CD8-positive, alpha-beta memory T cell (primary cell): ENCODE measurements at regions of chr19 and their contacts with region 1.

Region 1: DNA sequence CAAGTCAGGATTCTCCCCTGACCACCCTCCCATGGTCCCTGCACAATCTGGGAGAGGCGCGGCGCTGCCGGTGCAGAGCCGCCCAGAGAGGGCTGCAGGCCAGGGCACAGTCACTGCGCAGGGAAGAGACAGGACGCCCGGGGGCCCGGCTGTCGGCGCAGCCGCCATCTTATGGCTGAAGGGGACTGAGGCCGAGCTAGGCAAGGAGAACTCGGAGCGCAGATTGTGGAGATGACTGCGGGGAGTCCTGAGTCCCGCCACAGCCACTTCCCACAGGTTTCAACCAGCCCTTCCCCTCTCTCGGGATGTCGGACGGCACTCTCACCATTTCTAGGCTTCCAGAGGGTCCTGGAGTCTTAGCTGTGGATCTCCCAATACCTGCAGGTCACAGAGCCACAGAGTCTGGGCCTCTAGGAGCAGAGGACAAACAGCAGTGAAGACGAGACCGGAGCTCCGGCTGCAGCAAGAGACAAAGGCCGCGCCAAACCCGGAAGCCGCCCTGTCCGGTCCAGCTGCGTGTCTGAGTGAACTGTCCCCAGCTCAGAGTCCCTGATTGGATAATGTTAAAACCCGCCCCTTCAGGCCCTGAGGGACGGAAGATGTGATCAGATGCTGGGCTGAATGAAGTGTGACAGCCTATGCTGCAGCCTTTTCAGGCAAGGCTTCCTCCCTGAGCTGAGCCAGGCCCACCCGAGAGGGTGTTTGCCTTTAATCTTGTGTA is at the start of gene ZNF708:
- DNase-seq: peak; percentile 60 to 82 (median 75)
- H3K4me3 ChIP-seq: peak within 1 kb of the TSS; percentile 88
- H3K4me3 Mint-ChIP-seq: peak within 1 kb of the TSS; percentile 95 to 99 (median 98)
- H3K27ac ChIP-seq: peak within 1 kb of the TSS; percentile 96
- H3K27ac Mint-ChIP-seq: peak within 1 kb of the TSS; percentile 97 to 99 (median 98)
- H3K4me1 ChIP-seq: peaks cover 15% of the 10 kb centered on the region
- H3K4me1 Mint-ChIP-seq: peaks cover 44 to 55% (median 50%) of the 10 kb centered on the region in 3 donors
- H3K27me3 ChIP-seq: no peaks in the 10 kb centered on the region
- H3K27me3 Mint-ChIP-seq: no peaks in the 10 kb centered on the region
- total RNA-seq, gene ZNF708: 11.5 to 13.3 TPM

Region 2: GRCh38 chr19:21101521-21102242 is 227.4 kb before region 1 on chr19:
- CTCF ChIA-PET with region 1: no interaction called
- POLR2A ChIA-PET with region 1: no interaction called
- DNase-seq: no peak
- H3K4me3 ChIP-seq: no peak overlapping the region
- H3K4me3 Mint-ChIP-seq: no peak overlapping the region
- H3K27ac ChIP-seq: no peak overlapping the region
- H3K27ac Mint-ChIP-seq: peak overlapping the region in 2 of 8 donors; percentile 21 to 70
- H3K4me1 ChIP-seq: no peaks in the 10 kb centered on the region
- H3K4me1 Mint-ChIP-seq: peaks cover 0 to 4% (median 0%) of the 10 kb centered on the region in 3 donors
- H3K27me3 ChIP-seq: no peaks in the 10 kb centered on the region
- H3K27me3 Mint-ChIP-seq: no peaks in the 10 kb centered on the region

Region 3: DNA sequence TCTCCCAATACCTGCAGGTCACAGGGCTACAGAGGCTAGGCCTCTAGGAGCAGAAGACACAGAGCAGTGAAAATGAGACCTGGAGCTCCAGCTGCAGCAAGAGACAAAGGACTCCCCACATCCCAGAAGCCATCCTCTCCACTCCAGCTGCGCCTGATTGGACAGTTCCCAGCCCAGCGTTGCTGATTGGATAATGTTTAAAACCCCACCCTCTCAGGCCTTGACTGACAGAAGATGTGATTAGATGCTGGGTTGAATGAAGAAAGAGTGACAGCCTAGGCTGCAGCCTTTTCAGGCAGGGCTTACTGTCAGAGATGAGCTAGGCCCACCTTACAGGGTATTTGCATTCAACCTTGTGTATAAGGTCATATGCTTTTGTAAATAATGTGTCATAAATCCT is 59.2 kb before region 1 on chr19:
- CTCF ChIA-PET with region 1: no interaction called
- POLR2A ChIA-PET with region 1: no interaction called
- DNase-seq: no peak
- H3K4me3 ChIP-seq: no peak overlapping the region
- H3K4me3 Mint-ChIP-seq: no peak overlapping the region
- H3K27ac ChIP-seq: no peak overlapping the region
- H3K27ac Mint-ChIP-seq: no peak overlapping the region
- H3K4me1 ChIP-seq: no peaks in the 10 kb centered on the region
- H3K4me1 Mint-ChIP-seq: no peaks in the 10 kb centered on the region
- H3K27me3 ChIP-seq: no peaks in the 10 kb centered on the region
- H3K27me3 Mint-ChIP-seq: peaks cover 0 to 4% of the 10 kb centered on the region in 2 donors

Region 4: GRCh38 chr19:21358768-21359451 is 29.9 kb after region 1 on chr19 and contains the start of gene ZNF738:
- CTCF ChIA-PET with region 1: interaction called, 6 read pairs
- POLR2A ChIA-PET with region 1: interaction called, 11 read pairs
- DNase-seq: peak; percentile 73 to 90 (median 79)
- H3K4me3 ChIP-seq: peak within 1 kb of the TSS; percentile 90
- H3K4me3 Mint-ChIP-seq: peak within 1 kb of the TSS; percentile 98 to 100 (median 99)
- H3K27ac ChIP-seq: peak within 1 kb of the TSS; percentile 75
- H3K27ac Mint-ChIP-seq: peak within 1 kb of the TSS; percentile 89 to 99 (median 96)
- H3K4me1 ChIP-seq: peaks cover 7% of the 10 kb centered on the region
- H3K4me1 Mint-ChIP-seq: peaks cover 11 to 25% (median 19%) of the 10 kb centered on the region in 3 donors
- H3K27me3 ChIP-seq: no peaks in the 10 kb centered on the region
- H3K27me3 Mint-ChIP-seq: no peaks in the 10 kb centered on the region
- total RNA-seq, gene ZNF738: 8.3 to 8.4 TPM

Region 5: GRCh38 chr19:21383980-21384582 is 55.0 kb after region 1 on chr19:
- CTCF ChIA-PET with region 1: no interaction called
- POLR2A ChIA-PET with region 1: no interaction called
- DNase-seq: no peak
- H3K4me3 ChIP-seq: no peak overlapping the region
- H3K4me3 Mint-ChIP-seq: no peak overlapping the region
- H3K27ac ChIP-seq: no peak overlapping the region
- H3K27ac Mint-ChIP-seq: no peak overlapping the region
- H3K4me1 ChIP-seq: no peaks in the 10 kb centered on the region
- H3K4me1 Mint-ChIP-seq: no peaks in the 10 kb centered on the region
- H3K27me3 ChIP-seq: no peaks in the 10 kb centered on the region
- H3K27me3 Mint-ChIP-seq: no peaks in the 10 kb centered on the region

Region 6: DNA sequence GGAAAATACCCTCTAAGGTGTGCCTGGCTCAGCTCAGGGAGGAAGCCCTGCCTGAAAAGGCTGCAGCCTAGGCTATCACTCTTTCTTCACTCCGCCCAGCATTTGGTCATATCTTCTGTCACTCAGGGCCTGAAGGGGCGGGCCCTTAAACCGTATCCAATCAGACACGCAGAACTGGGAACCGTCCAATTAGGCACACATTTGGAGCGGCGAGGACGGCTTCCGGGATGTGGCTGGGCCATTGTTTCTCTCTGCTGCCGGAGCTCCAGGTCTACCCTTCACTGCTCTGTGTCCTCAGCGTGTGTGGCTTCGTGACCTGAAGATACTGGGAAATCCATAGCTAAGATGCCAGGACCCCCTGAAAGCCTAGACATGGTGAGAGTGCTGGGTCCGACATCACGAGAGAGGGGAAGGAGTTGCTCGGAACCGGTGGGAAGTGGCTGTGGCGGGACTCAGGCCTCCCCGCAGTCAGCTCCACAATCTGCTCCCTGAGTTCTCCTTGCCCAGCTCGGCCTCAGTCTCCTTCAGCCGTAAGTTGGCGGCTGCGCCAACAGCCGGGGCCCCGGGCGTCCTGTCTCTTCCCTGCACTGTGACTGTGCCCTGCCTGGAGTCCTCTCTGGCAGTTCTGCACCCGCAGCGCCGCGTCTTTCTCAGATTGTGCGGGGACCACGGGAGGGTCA is 68.0 kb after region 1 on chr19 and contains the start of gene ZNF493:
- CTCF ChIA-PET with region 1: interaction called, 3 read pairs
- POLR2A ChIA-PET with region 1: interaction called, 13 read pairs
- DNase-seq: peak; percentile 80 to 93 (median 89)
- H3K4me3 ChIP-seq: peak within 1 kb of the TSS; percentile 78
- H3K4me3 Mint-ChIP-seq: peak within 1 kb of the TSS; percentile 94 to 99 (median 97)
- H3K27ac ChIP-seq: peak within 1 kb of the TSS; percentile 75
- H3K27ac Mint-ChIP-seq: peak within 1 kb of the TSS; percentile 62 to 97 (median 92)
- H3K4me1 ChIP-seq: peaks cover 19% of the 10 kb centered on the region
- H3K4me1 Mint-ChIP-seq: peaks cover 36 to 48% (median 46%) of the 10 kb centered on the region in 3 donors
- H3K27me3 ChIP-seq: no peaks in the 10 kb centered on the region
- H3K27me3 Mint-ChIP-seq: no peaks in the 10 kb centered on the region
- total RNA-seq, gene ZNF493: 13.3 to 15.1 TPM